ENCODE measurements at regions of chr19 and their contacts with region 1.

Region 1: GRCh38 chr19:36214386-36215275 is at the starts of genes ZNF146 and ZNF565:
- DNase-seq: peak; percentile 91 to 95
- H3K4me3 ChIP-seq: peak within 1 kb of the TSS; percentile 85 to 92 (median 90)
- H3K27ac ChIP-seq: peak within 1 kb of the TSS; percentile 97
- H3K4me1 ChIP-seq: peaks cover 0 to 6% (median 2%) of the 10 kb centered on the region in 4 experiments; a peak in 5 of 7 replicates
- H3K27me3 ChIP-seq: no peaks in the 10 kb centered on the region
- CTCF ChIP-seq: no peak
- EP300 ChIP-seq: 0 out of 3 replicates have a peak, but pooled peaks of 1 of the 2 experiments have one; percentile 6
- POLR2A ChIP-seq: peak; percentile 74 to 93; a peak in 2 of 3 replicates
- RAD21 ChIP-seq: no peak
- total RNA-seq, gene ZNF146: 154 and 161 TPM in 2 replicates
- total RNA-seq, gene ZNF565: 2.7 and 3.1 TPM in 2 replicates

Region 2: GRCh38 chr19:36139473-36140303 is 74.9 kb before region 1 on chr19 and contains the start of gene CAPNS1:
- CTCF ChIA-PET with region 1: no interaction called
- POLR2A ChIA-PET with region 1: interaction called, 12 read pairs
- DNase-seq: peak; percentile 91 to 98
- H3K4me3 ChIP-seq: peak within 1 kb of the TSS; percentile 89 to 98 (median 97)
- H3K27ac ChIP-seq: peak within 1 kb of the TSS; percentile 36; the same call in 1 of the 2 replicates
- H3K4me1 ChIP-seq: peaks cover 0 to 6% (median 5%) of the 10 kb centered on the region in 4 experiments; a peak in 3 of 7 replicates
- H3K27me3 ChIP-seq: no peaks in the 10 kb centered on the region
- CTCF ChIP-seq: peak in 2 of 3 experiments; percentile 4 to 14; a peak in 2 of 4 replicates
- EP300 ChIP-seq: peak in 1 of 2 experiments; percentile 16; a peak in 1 of 3 replicates
- POLR2A ChIP-seq: peak in 1 of 2 experiments; percentile 72; a peak in 1 of 3 replicates
- RAD21 ChIP-seq: no peak
- total RNA-seq, gene CAPNS1: 382 and 386 TPM in 2 replicates

Region 3: GRCh38 chr19:36225219-36225892 is 10.7 kb after region 1 on chr19:
- CTCF ChIA-PET with region 1: interaction called, 5 read pairs
- POLR2A ChIA-PET with region 1: interaction called, 23 read pairs
- DNase-seq: no peak
- H3K4me3 ChIP-seq: no peak overlapping the region
- H3K27ac ChIP-seq: no peak overlapping the region
- H3K4me1 ChIP-seq: no peaks in the 10 kb centered on the region; a peak in 2 of 7 replicates
- H3K27me3 ChIP-seq: no peaks in the 10 kb centered on the region
- CTCF ChIP-seq: no peak
- EP300 ChIP-seq: no peak
- POLR2A ChIP-seq: no peak
- RAD21 ChIP-seq: no peak

Region 4: DNA sequence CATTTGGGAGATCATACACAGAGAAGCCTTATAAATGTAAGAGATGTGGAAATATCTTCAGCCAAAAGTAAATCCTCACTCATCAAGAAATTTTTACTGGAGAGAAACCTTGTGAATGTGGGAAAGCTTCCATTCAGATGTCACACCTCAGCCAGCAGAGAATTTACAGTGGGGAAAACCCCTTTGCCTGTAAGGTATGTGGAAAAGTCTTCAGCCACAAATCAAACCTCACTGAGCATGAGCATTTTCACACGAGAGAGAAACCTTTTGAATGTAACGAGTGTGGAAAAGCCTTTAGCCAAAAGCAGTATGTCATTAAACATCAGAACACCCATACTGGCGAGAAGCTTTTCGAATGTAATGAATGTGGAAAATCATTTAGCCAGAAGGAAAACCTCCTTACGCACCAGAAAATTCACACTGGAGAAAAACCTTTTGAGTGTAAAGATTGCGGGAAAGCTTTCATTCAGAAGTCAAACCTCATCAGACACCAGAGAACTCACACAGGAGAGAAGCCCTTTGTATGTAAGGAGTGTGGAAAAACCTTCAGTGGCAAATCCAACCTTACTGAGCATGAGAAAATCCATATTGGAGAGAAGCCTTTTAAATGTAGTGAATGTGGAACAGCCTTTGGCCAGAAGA is 21.8 kb after region 1 on chr19:
- CTCF ChIA-PET with region 1: interaction called, 3 read pairs
- POLR2A ChIA-PET with region 1: interaction called, 20 read pairs
- DNase-seq: no peak
- H3K4me3 ChIP-seq: no peak overlapping the region
- H3K27ac ChIP-seq: no peak overlapping the region
- H3K4me1 ChIP-seq: peaks cover 0 to 3% (median 0%) of the 10 kb centered on the region in 4 experiments; a peak in 1 of 7 replicates
- H3K27me3 ChIP-seq: no peaks in the 10 kb centered on the region
- CTCF ChIP-seq: no peak
- EP300 ChIP-seq: no peak
- POLR2A ChIP-seq: no peak; a peak in 1 of 3 replicates
- RAD21 ChIP-seq: no peak

Region 5: GRCh38 chr19:36245210-36246005 is 30.8 kb after region 1 on chr19:
- CTCF ChIA-PET with region 1: interaction called, 8 read pairs
- POLR2A ChIA-PET with region 1: interaction called, 17 read pairs
- DNase-seq: peak; percentile 46 to 88
- H3K4me3 ChIP-seq: peak overlapping the region; percentile 31 to 73 (median 52)
- H3K27ac ChIP-seq: no peak overlapping the region
- H3K4me1 ChIP-seq: peaks cover 0 to 7% (median 2%) of the 10 kb centered on the region in 4 experiments; a peak in 4 of 7 replicates
- H3K27me3 ChIP-seq: peaks cover 0 to 7% (median 2%) of the 10 kb centered on the region in 4 experiments; a peak in 4 of 7 replicates
- CTCF ChIP-seq: peak; percentile 34 to 47 (median 46)
- EP300 ChIP-seq: no peak
- POLR2A ChIP-seq: peak in 1 of 2 experiments; percentile 29; a peak in 1 of 3 replicates
- RAD21 ChIP-seq: peak; percentile 34 to 44

Region 6: DNA sequence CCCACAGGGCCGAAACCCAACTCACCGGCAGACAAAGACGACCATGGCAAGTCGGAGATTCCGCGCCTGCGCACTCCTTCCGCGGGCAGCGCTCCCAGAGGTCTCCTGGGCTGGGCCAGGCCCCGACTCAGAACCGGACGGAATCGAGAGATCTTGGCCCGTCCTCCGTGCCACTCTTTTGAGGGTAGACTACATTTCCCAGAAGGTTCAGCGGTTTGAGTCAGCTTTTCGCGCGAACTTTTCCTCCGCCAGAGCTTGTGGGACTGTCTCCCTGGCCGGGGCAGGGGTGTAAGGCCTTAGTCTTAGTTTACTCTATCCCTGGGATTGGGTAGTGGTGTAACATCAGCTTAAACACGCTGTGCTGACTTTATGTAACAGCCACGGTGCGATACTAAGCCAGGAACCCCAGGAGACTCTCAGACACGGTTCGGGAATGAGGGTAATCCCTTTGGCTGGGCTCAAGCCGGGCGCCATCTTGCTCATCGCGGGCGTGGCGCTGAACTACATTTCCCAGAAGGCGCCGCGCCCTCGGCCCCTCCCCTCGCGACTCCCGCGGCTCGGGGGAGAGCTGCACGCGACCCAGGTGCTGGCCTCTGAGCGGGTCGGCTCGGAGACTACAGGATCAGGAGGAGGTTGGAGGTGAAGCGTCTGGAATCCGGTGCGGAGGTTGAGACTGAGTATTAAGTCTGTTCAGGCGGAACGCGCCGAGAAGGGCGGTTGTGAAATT is 313.7 kb after region 1 on chr19 and contains the start of gene ZNF260:
- CTCF ChIA-PET with region 1: no interaction called
- POLR2A ChIA-PET with region 1: interaction called, 12 read pairs
- DNase-seq: peak; percentile 92 to 96
- H3K4me3 ChIP-seq: peak within 1 kb of the TSS; percentile 72 to 98 (median 85)
- H3K27ac ChIP-seq: peak within 1 kb of the TSS; percentile 99
- H3K4me1 ChIP-seq: peaks cover 0 to 4% (median 2%) of the 10 kb centered on the region in 4 experiments; a peak in 6 of 7 replicates
- H3K27me3 ChIP-seq: no peaks in the 10 kb centered on the region
- CTCF ChIP-seq: no peak
- EP300 ChIP-seq: 0 out of 3 replicates have a peak, but pooled peaks of 1 of the 2 experiments have one; percentile 8
- POLR2A ChIP-seq: peak; percentile 80 to 84; a peak in 2 of 3 replicates
- RAD21 ChIP-seq: no peak
- total RNA-seq, gene ZNF260: 30.7 and 32.3 TPM in 2 replicates